Naive thymus-derived CD4-positive, alpha-beta T cell (primary cell): ENCODE measurements at regions of chr9 and their contacts with region 1.

Region 1: GRCh38 chr9:130866474-130866965 is 30.1 kb downstream of the QRFP start:
- DNase-seq: peak; percentile 8 to 54 (median 40)
- ATAC-seq: peak; percentile 56
- H3K4me3 ChIP-seq: no peak overlapping the region
- H3K4me3 Mint-ChIP-seq: no peak overlapping the region
- H3K27ac ChIP-seq: no peak overlapping the region
- H3K27ac Mint-ChIP-seq: no peak overlapping the region
- H3K4me1 ChIP-seq: no peaks in the 10 kb centered on the region
- H3K4me1 Mint-ChIP-seq: peaks cover 2 to 9% (median 5%) of the 10 kb centered on the region in 7 donors
- H3K27me3 ChIP-seq: no peaks in the 10 kb centered on the region
- H3K27me3 Mint-ChIP-seq: no peaks in the 10 kb centered on the region

Region 2: DNA sequence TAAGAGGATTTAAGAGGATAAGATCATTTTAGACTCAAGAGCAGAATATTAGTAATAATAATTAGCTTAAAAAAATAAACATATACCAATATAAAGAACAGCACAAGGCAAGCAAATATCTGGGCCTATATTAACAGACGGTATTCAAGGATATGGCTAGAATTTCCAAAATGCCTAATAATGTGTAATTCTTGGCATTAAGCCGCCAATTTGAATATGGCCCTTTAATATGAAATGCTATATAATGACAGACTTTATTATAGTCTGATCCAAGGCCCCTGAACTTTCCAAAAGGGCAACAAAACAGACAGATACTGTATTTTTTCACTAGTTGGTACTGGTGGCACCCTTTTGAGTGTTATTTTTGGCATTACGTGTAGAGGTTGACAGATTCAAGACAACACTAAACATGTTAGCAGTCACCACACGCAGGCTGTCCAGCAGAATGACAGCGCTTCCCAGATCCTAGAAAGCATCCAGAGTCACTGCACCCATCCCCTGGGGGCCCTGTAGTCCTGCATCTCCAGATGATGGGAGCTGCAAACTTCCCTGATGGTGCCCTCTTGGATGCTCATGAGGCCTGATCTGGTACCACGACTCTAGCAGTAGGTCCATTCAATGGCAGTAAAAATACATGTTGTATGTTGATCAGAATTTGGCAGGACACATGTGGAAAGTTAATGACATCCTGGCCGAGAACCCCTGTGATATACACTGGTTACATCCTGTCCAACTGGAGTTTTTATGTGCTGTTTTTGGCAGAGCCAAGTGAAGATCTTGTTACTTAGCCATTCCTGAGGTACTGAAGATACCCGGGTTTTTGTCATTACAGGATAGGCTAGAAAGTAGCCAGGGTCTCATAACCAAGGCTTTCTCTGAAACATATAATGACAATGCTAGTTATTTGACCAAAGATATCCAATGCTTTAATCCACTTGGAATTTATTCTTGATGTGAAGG is 33.2 kb before region 1 on chr9:
- CTCF ChIA-PET with region 1: no interaction called
- POLR2A ChIA-PET with region 1: no interaction called
- intact Hi-C with region 1: no loop called
- DNase-seq: no peak
- ATAC-seq: no peak
- H3K4me3 ChIP-seq: no peak overlapping the region
- H3K4me3 Mint-ChIP-seq: peak overlapping the region in 9 of 10 donors; percentile 88 to 94 (median 92)
- H3K27ac ChIP-seq: peak overlapping the region; percentile 11
- H3K27ac Mint-ChIP-seq: peak overlapping the region in 6 of 9 donors; percentile 7 to 90 (median 70)
- H3K4me1 ChIP-seq: peaks cover 0 to 19% of the 10 kb centered on the region in 2 donors
- H3K4me1 Mint-ChIP-seq: peaks cover 20 to 51% (median 44%) of the 10 kb centered on the region in 7 donors
- H3K27me3 ChIP-seq: no peaks in the 10 kb centered on the region
- H3K27me3 Mint-ChIP-seq: peaks cover 0 to 37% (median 0%) of the 10 kb centered on the region in 5 donors

Region 3: GRCh38 chr9:130940693-130941576 is 74.4 kb after region 1 on chr9:
- CTCF ChIA-PET with region 1: no interaction called
- POLR2A ChIA-PET with region 1: no interaction called
- intact Hi-C with region 1: loop called (anchors 1 kb)
- DNase-seq: peak; percentile 30 to 78 (median 56)
- ATAC-seq: peak; percentile 83
- H3K4me3 ChIP-seq: no peak overlapping the region
- H3K4me3 Mint-ChIP-seq: peak overlapping the region in 8 of 10 donors; percentile 10 to 62 (median 52)
- H3K27ac ChIP-seq: no peak overlapping the region
- H3K27ac Mint-ChIP-seq: peak overlapping the region in 1 of 9 donors; percentile 52
- H3K4me1 ChIP-seq: no peaks in the 10 kb centered on the region
- H3K4me1 Mint-ChIP-seq: peaks cover 0 to 15% (median 10%) of the 10 kb centered on the region in 7 donors
- H3K27me3 ChIP-seq: peaks cover 0 to 2% of the 10 kb centered on the region in 2 donors
- H3K27me3 Mint-ChIP-seq: peaks cover 34 to 71% (median 58%) of the 10 kb centered on the region in 5 donors

Region 4: DNA sequence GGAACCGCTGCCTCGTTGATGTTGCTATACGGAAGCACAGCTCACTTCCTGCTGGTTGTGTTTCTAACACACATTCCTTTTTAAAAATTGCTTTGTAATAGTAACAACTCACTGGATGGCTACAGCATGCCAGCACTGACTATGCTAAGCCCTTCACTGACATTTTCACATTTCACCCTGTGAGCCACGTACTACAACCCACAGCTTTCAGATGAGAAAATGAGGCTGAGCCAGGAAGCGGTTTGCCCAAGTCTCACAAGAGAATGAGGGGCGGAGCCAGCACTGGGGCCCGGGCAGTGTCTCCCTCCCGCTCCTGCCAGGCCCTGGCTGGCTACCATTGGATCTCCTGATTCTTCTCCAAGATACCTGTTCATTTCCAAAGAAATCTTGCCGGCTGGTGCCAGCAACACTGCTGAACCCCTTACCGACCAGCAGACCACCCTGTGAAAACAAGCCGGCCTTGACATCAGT is 371.4 kb after region 1 on chr9:
- CTCF ChIA-PET with region 1: no interaction called
- POLR2A ChIA-PET with region 1: no interaction called
- intact Hi-C with region 1: no loop called
- DNase-seq: peak; percentile 59 to 89 (median 84)
- ATAC-seq: peak; percentile 94
- H3K4me3 ChIP-seq: peak overlapping the region; percentile 18
- H3K4me3 Mint-ChIP-seq: peak overlapping the region; percentile 79 to 89 (median 82)
- H3K27ac ChIP-seq: peak overlapping the region; percentile 69
- H3K27ac Mint-ChIP-seq: peak overlapping the region; percentile 88 to 97 (median 96)
- H3K4me1 ChIP-seq: peaks cover 42 to 43% of the 10 kb centered on the region in 2 donors
- H3K4me1 Mint-ChIP-seq: peaks cover 29 to 61% (median 48%) of the 10 kb centered on the region in 7 donors
- H3K27me3 ChIP-seq: no peaks in the 10 kb centered on the region
- H3K27me3 Mint-ChIP-seq: no peaks in the 10 kb centered on the region